PC-3 (cell line): ENCODE measurements at regions of chr2 and their contacts with region 1.

Region 1: GRCh38 chr2:237201461-237202287 is 116.0 kb downstream of the COPS8 start:
- DNase-seq: peak; percentile 96
- ATAC-seq: peak; percentile 89
- H3K4me3 ChIP-seq: peak overlapping the region; percentile 40; the same call in 1 of the 2 replicates
- H3K27ac ChIP-seq: peak overlapping the region; percentile 71
- H3K4me1 ChIP-seq: peaks cover 55% of the 10 kb centered on the region
- H3K27me3 ChIP-seq: no peaks in the 10 kb centered on the region
- CTCF ChIP-seq: no peak

Region 2: DNA sequence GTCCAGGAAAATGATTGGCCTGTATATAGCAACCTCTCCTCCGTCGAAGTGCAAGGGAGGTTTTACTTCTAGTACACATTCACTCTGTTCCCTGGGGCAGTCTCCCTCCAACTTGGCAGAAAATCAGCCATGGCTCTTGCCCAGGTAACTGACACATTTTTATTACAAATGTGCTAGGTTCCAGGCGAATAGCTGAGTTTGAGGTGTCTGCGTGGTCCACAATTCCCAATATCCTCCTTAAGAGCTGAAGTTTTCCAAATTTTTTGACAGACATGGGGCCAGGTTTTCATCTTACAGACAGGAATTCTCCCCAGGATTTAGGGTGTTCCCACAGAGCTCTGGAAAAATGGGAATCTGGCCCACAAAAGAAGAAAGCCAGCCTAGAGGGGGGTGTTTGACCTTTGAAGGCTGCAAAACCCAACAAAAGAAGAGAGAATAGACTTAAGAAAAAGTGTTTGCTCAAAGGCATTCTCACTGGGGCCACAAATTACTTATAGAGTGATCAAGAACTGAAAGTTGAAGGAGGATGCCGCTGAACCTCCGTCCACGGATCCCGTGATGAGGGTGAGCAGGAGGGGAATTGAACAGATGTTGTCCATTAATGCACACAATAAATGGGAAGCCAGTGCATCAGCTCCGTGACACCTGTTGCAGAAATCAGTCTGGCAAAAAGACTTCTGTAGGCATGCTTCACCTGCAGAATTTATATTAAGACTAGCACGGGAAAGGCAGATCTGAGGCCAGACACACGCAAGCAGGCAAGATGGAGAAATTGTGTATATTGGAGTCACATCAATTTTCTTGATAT is 358.3 kb before region 1 on chr2:
- CTCF ChIA-PET with region 1: no interaction called
- POLR2A ChIA-PET with region 1: no interaction called
- intact Hi-C with region 1: no loop called
- DNase-seq: no peak
- ATAC-seq: no peak
- H3K4me3 ChIP-seq: no peak overlapping the region
- H3K27ac ChIP-seq: no peak overlapping the region
- H3K4me1 ChIP-seq: no peaks in the 10 kb centered on the region
- H3K27me3 ChIP-seq: no peaks in the 10 kb centered on the region
- CTCF ChIP-seq: no peak

Region 3: DNA sequence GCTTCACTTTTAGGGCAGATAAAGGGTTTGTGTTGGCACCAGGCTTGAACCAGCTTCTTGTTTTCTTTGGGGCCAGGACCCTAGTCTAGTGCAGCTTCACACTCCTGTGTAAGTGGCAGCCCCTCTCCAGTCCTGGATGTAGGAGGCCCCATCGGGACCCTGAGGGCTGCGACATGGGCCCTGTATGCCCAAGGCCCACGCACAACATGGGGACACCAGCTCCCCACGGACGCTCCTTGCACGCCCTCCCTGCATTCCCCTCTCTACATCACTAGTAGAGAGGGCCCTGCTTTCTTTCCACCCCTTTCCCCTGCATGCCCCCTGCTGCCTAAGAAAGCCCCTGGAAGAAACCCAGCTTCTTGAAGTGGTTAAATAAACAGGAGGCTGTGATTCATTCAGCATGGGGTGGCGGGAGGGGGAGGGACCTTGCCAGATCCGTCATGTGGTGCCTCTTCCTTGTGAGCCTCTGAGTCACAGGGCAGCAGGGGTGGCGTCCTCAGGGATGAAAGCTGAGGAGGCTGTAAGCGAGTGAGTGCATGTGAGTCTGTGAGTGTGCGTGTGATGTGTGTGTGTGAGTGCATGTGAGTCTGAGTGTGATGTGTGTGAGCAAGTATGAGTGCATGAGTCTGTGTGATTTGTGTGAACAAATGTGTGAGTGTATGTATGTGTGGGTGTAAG is 73.5 kb before region 1 on chr2:
- CTCF ChIA-PET with region 1: no interaction called
- POLR2A ChIA-PET with region 1: no interaction called
- intact Hi-C with region 1: no loop called
- DNase-seq: peak; percentile 93
- ATAC-seq: peak; percentile 100
- H3K4me3 ChIP-seq: 0 out of 2 replicates have a peak overlapping the region, but pooled peaks have one; percentile 10
- H3K27ac ChIP-seq: peak overlapping the region; percentile 55
- H3K4me1 ChIP-seq: peaks cover 15% of the 10 kb centered on the region
- H3K27me3 ChIP-seq: no peaks in the 10 kb centered on the region
- CTCF ChIP-seq: peak; percentile 24; the same call in 1 of the 2 replicates

Region 4: GRCh38 chr2:237223201-237223861 is 21.7 kb after region 1 on chr2:
- CTCF ChIA-PET with region 1: interaction called, 3 read pairs
- POLR2A ChIA-PET with region 1: no interaction called
- intact Hi-C with region 1: loop called (anchors 2 kb)
- DNase-seq: peak; percentile 67
- ATAC-seq: no peak
- H3K4me3 ChIP-seq: no peak overlapping the region
- H3K27ac ChIP-seq: no peak overlapping the region; the same call in 1 of the 2 replicates
- H3K4me1 ChIP-seq: peaks cover 32% of the 10 kb centered on the region
- H3K27me3 ChIP-seq: no peaks in the 10 kb centered on the region
- CTCF ChIP-seq: no peak

Region 5: DNA sequence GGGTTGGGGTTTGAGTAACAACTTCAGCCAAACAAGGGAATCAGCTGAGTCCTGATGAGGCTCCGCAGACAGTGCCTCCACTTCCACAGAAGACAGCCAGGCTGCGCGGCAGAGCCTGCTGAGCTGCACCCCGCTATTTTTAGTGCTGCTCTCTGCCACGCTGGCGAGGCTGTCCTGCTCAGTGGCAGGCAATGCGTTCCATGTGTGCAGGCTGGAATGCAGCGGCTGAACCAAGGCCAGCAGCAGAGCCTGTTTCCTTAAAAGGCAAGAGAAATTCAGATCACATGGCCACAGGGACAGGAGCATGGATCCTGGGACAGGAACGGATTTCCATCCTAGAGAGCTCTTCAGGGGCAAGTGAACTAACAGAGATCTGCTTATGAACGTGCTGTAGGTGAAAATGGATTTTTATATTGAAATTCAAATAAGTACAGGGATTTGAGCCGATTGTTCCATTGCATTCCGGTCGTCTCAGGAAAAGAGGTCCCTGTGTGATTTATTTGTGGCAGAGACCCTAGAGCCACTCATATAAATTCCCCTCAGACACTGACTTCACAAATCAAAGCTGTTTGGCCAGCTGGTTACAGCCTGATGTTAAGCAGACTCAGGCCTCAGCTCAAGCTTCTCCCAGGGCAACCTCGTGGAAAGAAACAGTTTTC is 113.6 kb after region 1 on chr2:
- CTCF ChIA-PET with region 1: no interaction called
- POLR2A ChIA-PET with region 1: interaction called, 12 read pairs
- intact Hi-C with region 1: no loop called
- DNase-seq: no peak
- ATAC-seq: no peak
- H3K4me3 ChIP-seq: no peak overlapping the region
- H3K27ac ChIP-seq: no peak overlapping the region
- H3K4me1 ChIP-seq: no peaks in the 10 kb centered on the region
- H3K27me3 ChIP-seq: no peaks in the 10 kb centered on the region
- CTCF ChIP-seq: no peak